Ascending aorta (tissue), 2 donors: ENCODE measurements at regions of chr9 and their contacts with region 1.

Region 1: GRCh38 chr9:115146581-115147021 is 28.6 kb upstream of the TNC start:
- DNase-seq: peak in 1 of 2 donors; percentile 77
- H3K4me3 ChIP-seq: no peak overlapping the region
- H3K27ac ChIP-seq: peak overlapping the region; percentile 85 to 86
- H3K4me1 ChIP-seq: peaks cover 6 to 7% of the 10 kb centered on the region in 2 donors
- H3K27me3 ChIP-seq: no peaks in the 10 kb centered on the region
- CTCF ChIP-seq: no peak

Region 2: GRCh38 chr9:114587385-114588202 is 559.0 kb before region 1 on chr9 and contains the start of gene ATP6V1G1:
- intact Hi-C with region 1: no loop called
- DNase-seq: peak; percentile 98 to 100
- H3K4me3 ChIP-seq: peak within 1 kb of the TSS; percentile 79 to 85
- H3K27ac ChIP-seq: peak within 1 kb of the TSS; percentile 78 to 84
- H3K4me1 ChIP-seq: peaks cover 5 to 40% of the 10 kb centered on the region in 2 donors
- H3K27me3 ChIP-seq: no peaks in the 10 kb centered on the region
- CTCF ChIP-seq: no peak
- total RNA-seq, gene ATP6V1G1: 135 TPM

Region 3: DNA sequence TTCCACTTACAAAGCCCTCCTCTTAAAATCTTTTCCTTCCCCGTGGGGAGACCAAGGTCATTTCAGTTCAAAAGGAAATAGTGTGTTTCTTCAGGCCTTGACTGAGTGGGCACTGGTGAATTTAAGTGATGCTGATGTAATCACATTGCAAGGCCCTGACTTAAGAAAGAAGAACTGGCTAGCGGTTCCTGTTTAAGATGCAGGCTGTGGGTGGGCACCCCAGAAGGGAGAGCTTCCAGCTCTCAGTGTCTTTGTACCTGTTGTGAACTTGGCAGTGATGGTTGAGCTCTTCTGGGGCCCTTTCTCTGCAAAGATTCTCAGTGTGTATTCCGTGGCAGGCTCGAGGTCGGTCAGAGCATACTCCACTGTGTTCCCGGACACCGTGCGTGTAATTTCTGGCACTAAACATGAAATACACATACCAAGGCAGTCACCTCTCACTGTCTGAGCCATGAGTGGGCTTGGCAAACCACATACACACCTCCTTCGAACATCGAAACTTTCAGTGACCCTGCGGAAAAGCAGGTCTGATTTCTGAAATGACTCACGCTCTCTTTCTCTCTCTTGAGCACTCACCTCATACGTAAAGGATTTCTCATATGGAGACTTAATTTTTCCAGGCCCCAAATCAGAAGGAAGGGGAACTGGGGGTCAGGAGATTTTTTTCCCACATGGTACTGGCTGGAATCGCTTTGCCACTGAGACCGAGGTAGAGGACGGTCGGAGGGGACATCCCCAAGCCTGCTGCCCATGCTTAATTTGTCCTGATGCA is 110.6 kb before region 1 on chr9:
- intact Hi-C with region 1: loop called (anchors 2 kb)
- DNase-seq: peak in 1 of 2 donors; percentile 76
- H3K4me3 ChIP-seq: no peak overlapping the region
- H3K27ac ChIP-seq: peak overlapping the region; percentile 91 to 93
- H3K4me1 ChIP-seq: peaks cover 16 to 34% of the 10 kb centered on the region in 2 donors
- H3K27me3 ChIP-seq: no peaks in the 10 kb centered on the region
- CTCF ChIP-seq: no peak

Region 4: GRCh38 chr9:115442054-115442453 is 295.5 kb after region 1 on chr9:
- intact Hi-C with region 1: loop called (anchors 5 kb)
- DNase-seq: no peak
- H3K4me3 ChIP-seq: no peak overlapping the region
- H3K27ac ChIP-seq: peak overlapping the region; percentile 63 to 82
- H3K4me1 ChIP-seq: peaks cover 0 to 17% of the 10 kb centered on the region in 2 donors
- H3K27me3 ChIP-seq: no peaks in the 10 kb centered on the region
- CTCF ChIP-seq: no peak